MCF 10A (cell line): ENCODE measurements at regions of chr11 and their contacts with region 1.

Region 1: GRCh38 chr11:61581030-61581928 is at the start of gene SYT7:
- DNase-seq: peak; percentile 95
- H3K4me3 Mint-ChIP-seq: peak within 1 kb of the TSS; percentile 71
- H3K27ac Mint-ChIP-seq: no peak within 1 kb of the TSS
- H3K4me1 Mint-ChIP-seq: peaks cover 12% of the 10 kb centered on the region
- H3K27me3 Mint-ChIP-seq: no peaks in the 10 kb centered on the region
- CTCF ChIP-seq: no peak
- total RNA-seq, gene SYT7: 25.2 and 57.7 TPM in 2 replicates

Region 2: GRCh38 chr11:61616434-61616833 is 35.2 kb after region 1 on chr11:
- CTCF ChIA-PET with region 1: interaction called, 3 read pairs
- POLR2A ChIA-PET with region 1: no interaction called
- intact Hi-C with region 1: loop called (anchors 1 kb)
- DNase-seq: no peak
- H3K4me3 Mint-ChIP-seq: peak overlapping the region; percentile 5
- H3K27ac Mint-ChIP-seq: no peak overlapping the region
- H3K4me1 Mint-ChIP-seq: peaks cover 18% of the 10 kb centered on the region
- H3K27me3 Mint-ChIP-seq: no peaks in the 10 kb centered on the region
- CTCF ChIP-seq: no peak

Region 3: DNA sequence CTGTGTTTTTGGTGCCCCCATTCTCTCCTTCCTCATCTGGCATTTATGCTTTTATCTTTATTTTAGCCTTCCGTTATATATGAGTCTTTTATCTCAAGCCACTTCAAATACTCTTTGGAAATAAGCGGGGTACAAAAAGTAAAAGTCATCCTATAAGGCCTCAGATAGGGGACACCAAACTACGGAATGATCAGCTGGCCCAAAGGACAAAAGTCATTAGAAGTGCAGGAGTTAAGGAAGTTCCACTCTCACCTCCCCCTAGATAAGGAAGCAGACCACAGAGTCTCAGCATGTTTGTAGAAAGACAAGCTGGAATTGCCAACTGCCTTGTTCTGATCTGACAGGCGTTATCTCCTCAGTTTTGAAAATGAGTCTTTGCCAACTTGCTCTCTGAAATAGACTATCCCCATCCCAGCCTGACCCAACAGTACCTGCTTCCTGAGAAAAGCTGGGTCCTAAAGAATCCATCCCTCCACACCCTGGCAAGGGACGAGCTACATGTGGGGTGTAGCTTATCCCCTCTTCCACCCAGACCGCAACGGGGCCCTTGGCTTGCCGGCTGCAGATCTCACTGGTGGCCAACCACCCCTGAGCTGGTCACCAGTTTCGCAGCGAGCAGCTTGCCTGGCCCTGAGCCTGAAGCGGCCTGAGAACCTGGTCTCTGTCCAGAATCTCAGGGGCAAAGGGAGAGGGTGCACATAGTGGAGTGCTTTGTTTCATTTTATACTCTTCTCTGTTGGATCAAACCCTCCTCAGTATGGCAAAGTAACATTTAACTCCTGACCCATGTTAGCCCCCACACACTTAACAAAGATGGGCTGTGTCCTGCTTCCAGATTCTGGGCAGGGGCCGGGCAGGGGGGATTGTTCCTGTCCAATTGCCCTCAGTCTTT is 260.6 kb after region 1 on chr11:
- CTCF ChIA-PET with region 1: no interaction called
- POLR2A ChIA-PET with region 1: no interaction called
- intact Hi-C with region 1: no loop called
- DNase-seq: no peak
- H3K4me3 Mint-ChIP-seq: no peak overlapping the region
- H3K27ac Mint-ChIP-seq: peak overlapping the region; percentile 36
- H3K4me1 Mint-ChIP-seq: no peaks in the 10 kb centered on the region
- H3K27me3 Mint-ChIP-seq: no peaks in the 10 kb centered on the region
- CTCF ChIP-seq: no peak